Transverse colon (tissue), 4 donors: ENCODE measurements at regions of chr11 and their contacts with region 1.

Region 1: GRCh38 chr11:6315811-6316425 is 4.4 kb downstream of the CAVIN3 start:
- DNase-seq: peak; percentile 45
- H3K4me3 ChIP-seq: no peak overlapping the region
- H3K27ac ChIP-seq: no peak overlapping the region
- H3K4me1 ChIP-seq: peaks cover 10 to 26% (median 18%) of the 10 kb centered on the region in 4 donors
- H3K27me3 ChIP-seq: peaks cover 5% of the 10 kb centered on the region
- CTCF ChIP-seq: peak; percentile 69 to 83 (median 75)
- EP300 ChIP-seq: no peak
- POLR2A ChIP-seq: no peak

Region 2: DNA sequence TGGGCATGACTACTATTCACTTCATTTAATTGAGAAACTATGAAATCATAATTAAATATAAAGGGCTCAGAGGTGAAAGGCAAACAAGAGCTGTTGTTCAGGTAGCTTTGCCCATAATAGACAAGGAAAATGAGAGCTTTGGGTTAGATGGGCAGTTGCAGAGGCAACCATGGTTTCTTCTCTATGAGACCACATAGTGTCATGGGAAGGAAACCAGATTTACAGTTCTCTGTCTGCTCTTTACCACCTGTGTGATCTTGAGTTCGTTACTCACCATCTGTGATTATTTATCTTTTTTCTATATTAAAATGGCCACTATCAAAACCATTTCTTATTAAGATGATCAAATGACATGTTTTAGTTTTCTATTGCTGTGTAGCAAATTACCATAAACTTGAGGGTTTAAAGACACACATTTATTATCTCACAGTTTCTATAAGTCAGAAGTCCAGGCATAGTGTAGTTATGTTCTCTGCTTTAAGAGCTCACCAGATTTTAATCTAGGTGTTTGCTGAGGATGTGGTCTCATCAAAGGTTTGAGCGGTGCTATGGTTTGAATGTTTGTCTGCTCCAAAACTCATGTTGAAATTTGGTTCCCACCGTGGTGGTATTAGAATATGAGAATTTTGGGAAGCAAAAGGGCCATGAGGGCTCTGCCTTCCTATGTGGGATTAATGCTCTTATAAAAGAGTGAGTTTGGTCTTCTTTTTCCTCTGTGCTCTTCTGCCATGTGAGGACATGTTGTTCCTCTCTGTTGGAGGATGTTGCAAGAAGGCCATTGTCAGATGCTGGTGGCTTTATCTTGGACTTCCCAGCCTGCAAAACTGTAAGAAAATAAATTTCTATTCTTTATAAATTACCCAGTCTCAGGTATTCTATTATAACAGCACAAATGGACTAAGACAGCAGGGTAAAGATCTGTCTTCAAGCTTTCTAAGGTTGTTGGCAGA is 417.7 kb after region 1 on chr11:
- in situ Hi-C with region 1: no loop called
- intact Hi-C with region 1: loop called (anchors 5 kb)
- DNase-seq: no peak
- H3K4me3 ChIP-seq: no peak overlapping the region
- H3K27ac ChIP-seq: no peak overlapping the region
- H3K4me1 ChIP-seq: peaks cover 0 to 4% (median 0%) of the 10 kb centered on the region in 4 donors
- H3K27me3 ChIP-seq: no peaks in the 10 kb centered on the region
- CTCF ChIP-seq: no peak
- EP300 ChIP-seq: no peak
- POLR2A ChIP-seq: no peak